ENCODE measurements at regions of chr12 and their contacts with region 1.

Region 1: GRCh38 chr12:49828133-49829091 is at the start of gene NCKAP5L:
- DNase-seq: peak; percentile 97
- ATAC-seq: peak; percentile 99
- H3K4me3 Mint-ChIP-seq: peak within 1 kb of the TSS; percentile 86
- H3K27ac Mint-ChIP-seq: peak within 1 kb of the TSS; percentile 90
- H3K4me1 Mint-ChIP-seq: peaks cover 27% of the 10 kb centered on the region
- H3K27me3 Mint-ChIP-seq: no peaks in the 10 kb centered on the region
- total RNA-seq, gene NCKAP5L: 4.3 to 4.5 TPM

Region 2: GRCh38 chr12:48890657-48891418 is 937.6 kb before region 1 on chr12:
- CTCF ChIA-PET with region 1: no interaction called
- POLR2A ChIA-PET with region 1: no interaction called
- intact Hi-C with region 1: no loop called
- DNase-seq: peak; percentile 89
- ATAC-seq: peak; percentile 99
- H3K4me3 Mint-ChIP-seq: peak overlapping the region; percentile 4
- H3K27ac Mint-ChIP-seq: no peak overlapping the region
- H3K4me1 Mint-ChIP-seq: peaks cover 4% of the 10 kb centered on the region
- H3K27me3 Mint-ChIP-seq: peaks cover 14% of the 10 kb centered on the region

Region 3: GRCh38 chr12:49750027-49750995 is 78.1 kb before region 1 on chr12:
- CTCF ChIA-PET with region 1: no interaction called
- POLR2A ChIA-PET with region 1: no interaction called
- intact Hi-C with region 1: loop called in 1 of 2 experiments (anchors 2 kb)
- DNase-seq: peak; percentile 81
- ATAC-seq: peak; percentile 87
- H3K4me3 Mint-ChIP-seq: peak overlapping the region; percentile 69
- H3K27ac Mint-ChIP-seq: peak overlapping the region; percentile 98
- H3K4me1 Mint-ChIP-seq: peaks cover 87% of the 10 kb centered on the region
- H3K27me3 Mint-ChIP-seq: no peaks in the 10 kb centered on the region

Region 4: GRCh38 chr12:50025187-50026059 is 197.0 kb after region 1 on chr12 and contains the start of gene RACGAP1:
- CTCF ChIA-PET with region 1: interaction called, 3 read pairs
- POLR2A ChIA-PET with region 1: no interaction called
- intact Hi-C with region 1: loop called in 1 of 2 experiments (anchors 1 kb)
- DNase-seq: peak; percentile 97
- ATAC-seq: peak; percentile 98
- H3K4me3 Mint-ChIP-seq: peak within 1 kb of the TSS; percentile 90
- H3K27ac Mint-ChIP-seq: peak within 1 kb of the TSS; percentile 95
- H3K4me1 Mint-ChIP-seq: peaks cover 23% of the 10 kb centered on the region
- H3K27me3 Mint-ChIP-seq: no peaks in the 10 kb centered on the region
- total RNA-seq, gene RACGAP1: 99.7 to 118 TPM